ENCODE measurements at regions of chr12 and their contacts with region 1.

Region 1: DNA sequence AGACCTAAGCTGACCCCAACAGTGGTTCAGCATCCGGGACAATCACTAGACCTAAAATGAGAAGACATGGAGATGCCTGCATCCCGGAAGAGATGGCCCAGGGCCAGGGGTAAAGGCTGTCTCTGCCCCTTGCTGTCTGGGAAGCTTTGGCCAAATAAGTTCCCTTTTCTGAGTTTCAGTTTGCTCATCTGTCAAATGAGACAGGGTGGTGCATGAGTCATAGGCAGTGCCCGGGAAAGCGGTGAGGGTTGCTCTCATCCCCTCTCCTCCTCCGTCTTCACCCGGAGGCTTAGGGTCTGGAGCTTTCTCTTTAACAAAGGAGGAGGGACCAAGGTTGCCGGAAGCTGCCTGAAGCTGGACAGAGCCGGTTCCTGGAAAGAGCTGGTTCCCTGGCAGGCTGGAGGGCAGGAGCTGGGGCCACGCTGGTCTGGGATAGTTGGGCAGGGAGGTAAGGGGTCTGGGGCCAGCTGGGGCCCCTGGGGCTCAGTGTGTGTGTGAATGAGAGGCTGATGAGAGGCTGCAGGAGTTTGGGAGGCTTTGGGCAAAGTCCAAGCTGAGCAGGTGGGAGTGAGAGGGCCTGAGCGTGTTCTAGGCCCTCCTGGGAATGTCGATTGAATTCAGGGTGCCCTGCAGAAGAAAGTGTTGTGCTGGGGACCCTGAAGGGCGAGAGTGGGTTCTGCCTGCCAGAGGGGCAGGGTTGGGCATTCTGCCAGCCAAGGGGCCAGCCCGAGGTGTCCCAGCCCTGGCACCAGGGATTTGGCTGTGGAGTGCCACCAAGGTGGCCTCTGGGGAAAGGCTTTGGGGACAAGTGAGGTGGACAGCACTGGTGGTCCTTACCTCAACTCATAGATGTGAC is at the start of gene SDSL:
- DNase-seq: peak; percentile 27
- H3K4me3 ChIP-seq: peak within 1 kb of the TSS; percentile 55
- H3K27me3 ChIP-seq: peaks cover 2% of the 10 kb centered on the region; the same call in 1 of the 2 replicates
- CTCF ChIP-seq: no peak
- polyA plus RNA-seq, gene SDSL: 8.6 and 13.2 TPM in 2 replicates

Region 2: DNA sequence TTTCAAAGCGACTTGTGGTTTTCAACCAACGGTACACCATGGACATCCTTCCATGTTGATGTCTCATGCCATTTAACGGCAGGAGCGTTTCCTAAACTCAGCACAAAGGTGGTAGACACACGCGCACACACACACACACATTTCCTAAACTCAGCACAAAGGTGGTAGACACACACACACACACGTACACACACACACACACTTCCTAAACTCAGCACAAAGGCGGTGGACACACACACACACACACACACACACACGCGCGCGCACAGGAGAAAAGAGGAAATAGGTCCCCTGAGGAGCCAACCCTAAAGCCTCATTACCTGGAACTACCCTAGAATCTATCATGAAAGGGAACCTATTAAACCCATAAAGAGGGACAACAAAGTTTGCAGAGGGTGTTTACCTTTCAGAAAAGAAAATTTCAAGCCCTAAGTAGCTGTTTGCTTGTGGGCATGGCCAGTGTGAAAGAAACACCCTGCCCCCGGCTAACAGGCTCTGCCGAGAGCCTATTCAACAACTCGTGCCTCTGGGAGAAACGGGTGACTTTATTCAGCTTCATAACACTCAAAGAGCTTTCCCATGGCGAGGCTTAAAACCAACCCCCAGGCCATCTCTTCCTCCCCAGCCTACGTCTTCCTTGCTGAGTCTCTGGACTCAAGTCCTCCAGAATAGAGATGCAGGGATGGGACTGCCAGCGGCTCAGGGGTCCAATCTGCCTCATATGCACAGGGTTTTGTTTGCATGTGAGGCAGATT is 119.2 kb before region 1 on chr12:
- CTCF ChIA-PET with region 1: interaction called, 10 read pairs
- POLR2A ChIA-PET with region 1: no interaction called
- DNase-seq: no peak
- H3K4me3 ChIP-seq: no peak overlapping the region
- H3K27me3 ChIP-seq: no peaks in the 10 kb centered on the region
- CTCF ChIP-seq: no peak

Region 3: DNA sequence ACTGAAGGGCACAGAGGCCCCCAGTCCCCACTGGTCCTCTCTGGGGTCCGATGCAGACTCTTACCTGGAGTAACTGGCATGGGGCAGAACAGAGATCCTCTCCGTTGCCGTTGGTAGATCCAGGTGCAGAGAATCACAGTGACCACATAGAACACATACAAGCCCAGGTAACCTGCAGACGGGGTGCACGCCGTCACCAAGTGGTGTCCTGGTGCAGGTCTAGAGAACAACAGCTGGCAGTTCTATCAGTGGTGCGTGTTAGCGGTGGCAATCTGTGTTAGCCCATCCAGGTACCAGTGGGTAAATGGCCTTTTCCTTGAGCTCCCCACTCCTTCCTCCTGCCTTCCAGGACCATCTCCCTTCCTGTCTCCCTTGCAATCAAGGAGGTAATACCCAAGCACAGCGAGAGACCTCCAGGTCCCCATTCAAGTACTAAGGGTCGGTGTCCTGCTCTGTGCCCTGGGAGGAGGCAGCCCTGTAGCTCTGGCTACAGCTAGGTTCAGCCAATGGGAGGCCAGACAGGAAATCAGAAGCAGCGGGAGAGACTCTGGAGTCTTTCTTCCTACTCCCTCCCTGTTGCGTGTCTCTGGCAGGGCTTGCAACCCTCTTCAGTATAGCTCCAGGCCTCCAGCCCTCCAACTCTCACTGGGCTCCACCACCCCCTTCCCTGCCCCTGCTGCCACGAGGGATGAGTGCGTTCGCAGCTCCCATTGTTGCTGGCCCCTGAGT is 103.2 kb before region 1 on chr12:
- CTCF ChIA-PET with region 1: interaction called, 10 read pairs
- POLR2A ChIA-PET with region 1: no interaction called
- DNase-seq: no peak
- H3K4me3 ChIP-seq: no peak overlapping the region
- H3K27me3 ChIP-seq: no peaks in the 10 kb centered on the region
- CTCF ChIP-seq: no peak

Region 4: DNA sequence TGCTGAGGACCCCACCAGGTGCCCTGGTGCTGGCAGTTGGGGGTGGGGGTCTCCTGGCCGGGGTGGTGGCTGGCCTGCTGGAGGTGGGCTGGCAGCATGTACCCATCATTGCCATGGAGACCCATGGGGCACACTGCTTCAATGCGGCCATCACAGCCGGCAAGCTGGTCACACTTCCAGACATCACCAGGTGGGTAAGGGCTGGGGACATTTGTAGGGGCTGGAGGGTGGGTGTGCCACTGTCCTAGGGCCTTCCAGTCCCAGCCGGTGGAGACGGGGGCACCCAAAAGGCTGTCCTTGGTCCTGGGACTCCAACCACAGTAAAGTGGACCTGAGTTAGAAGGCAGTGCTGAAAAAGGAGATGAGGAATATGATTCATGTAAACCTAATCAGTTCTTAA is 13.1 kb after region 1 on chr12:
- CTCF ChIA-PET with region 1: interaction called, 11 read pairs
- POLR2A ChIA-PET with region 1: no interaction called
- DNase-seq: no peak
- H3K4me3 ChIP-seq: no peak overlapping the region
- H3K27me3 ChIP-seq: peaks cover 1% of the 10 kb centered on the region; the same call in 1 of the 2 replicates
- CTCF ChIP-seq: no peak

Region 5: GRCh38 chr12:113818833-113819232 is 396.6 kb after region 1 on chr12:
- CTCF ChIA-PET with region 1: no interaction called
- POLR2A ChIA-PET with region 1: no interaction called
- DNase-seq: no peak
- H3K4me3 ChIP-seq: no peak overlapping the region
- H3K27me3 ChIP-seq: no peaks in the 10 kb centered on the region
- CTCF ChIP-seq: peak; percentile 49

Region 6: GRCh38 chr12:114152890-114153289 is 730.6 kb after region 1 on chr12:
- CTCF ChIA-PET with region 1: no interaction called
- POLR2A ChIA-PET with region 1: no interaction called
- DNase-seq: peak; percentile 22
- H3K4me3 ChIP-seq: no peak overlapping the region
- H3K27me3 ChIP-seq: peaks cover 2% of the 10 kb centered on the region; the same call in 1 of the 2 replicates
- CTCF ChIP-seq: no peak

Measured in BJ (cell line).